ENCODE measurements at regions of chr12 and their contacts with region 1.

Region 1: GRCh38 chr12:6182116-6182898 is 17.9 kb upstream of the CD9 start:
- DNase-seq: peak; percentile 75
- ATAC-seq: peak; percentile 76
- H3K4me3 ChIP-seq: peak overlapping the region; percentile 43 to 70 (median 45); a peak in 5 of 6 replicates
- H3K27ac ChIP-seq: peak overlapping the region; percentile 79
- H3K4me1 ChIP-seq: peaks cover 73% of the 10 kb centered on the region
- H3K27me3 ChIP-seq: peaks cover 0 to 5% of the 10 kb centered on the region in 2 experiments; a peak in 1 of 5 replicates
- CTCF ChIP-seq: no peak
- EP300 ChIP-seq: no peak
- POLR2A ChIP-seq: peak; percentile 39 to 63; a peak in 3 of 4 replicates
- RAD21 ChIP-seq: no peak

Region 2: GRCh38 chr12:6062757-6063735 is 119.3 kb before region 1 on chr12:
- CTCF ChIA-PET with region 1: no interaction called
- POLR2A ChIA-PET with region 1: interaction called, 4 read pairs
- in situ Hi-C with region 1: loop called (anchors 5 kb)
- intact Hi-C with region 1: loop called (anchors 5 kb)
- DNase-seq: peak; percentile 24
- ATAC-seq: peak; percentile 73
- H3K4me3 ChIP-seq: peak overlapping the region in 1 of 3 experiments; percentile 42; a peak in 1 of 6 replicates
- H3K27ac ChIP-seq: no peak overlapping the region
- H3K4me1 ChIP-seq: peaks cover 54% of the 10 kb centered on the region
- H3K27me3 ChIP-seq: peaks cover 0 to 15% of the 10 kb centered on the region in 2 experiments; a peak in 2 of 5 replicates
- CTCF ChIP-seq: peak; percentile 95
- EP300 ChIP-seq: no peak
- POLR2A ChIP-seq: no peak
- RAD21 ChIP-seq: peak; percentile 89

Region 3: GRCh38 chr12:6069437-6070107 is 112.7 kb before region 1 on chr12:
- CTCF ChIA-PET with region 1: no interaction called
- POLR2A ChIA-PET with region 1: interaction called, 29 read pairs
- in situ Hi-C with region 1: loop called (anchors 5 kb)
- intact Hi-C with region 1: loop called (anchors 5 kb)
- DNase-seq: no peak
- ATAC-seq: no peak
- H3K4me3 ChIP-seq: no peak overlapping the region
- H3K27ac ChIP-seq: no peak overlapping the region
- H3K4me1 ChIP-seq: peaks cover 52% of the 10 kb centered on the region
- H3K27me3 ChIP-seq: peaks cover 0 to 31% of the 10 kb centered on the region in 2 experiments; a peak in 2 of 5 replicates
- CTCF ChIP-seq: no peak
- EP300 ChIP-seq: no peak
- POLR2A ChIP-seq: no peak
- RAD21 ChIP-seq: no peak

Region 4: GRCh38 chr12:6230321-6231110 is 48.2 kb after region 1 on chr12:
- CTCF ChIA-PET with region 1: no interaction called
- POLR2A ChIA-PET with region 1: interaction called, 12 read pairs
- in situ Hi-C with region 1: no loop called
- intact Hi-C with region 1: no loop called
- DNase-seq: peak; percentile 92
- ATAC-seq: peak; percentile 76
- H3K4me3 ChIP-seq: 0 out of 6 replicates have a peak overlapping the region, but pooled peaks of 1 of the 3 experiments have one; percentile 8
- H3K27ac ChIP-seq: peak overlapping the region; percentile 69
- H3K4me1 ChIP-seq: peaks cover 97% of the 10 kb centered on the region
- H3K27me3 ChIP-seq: no peaks in the 10 kb centered on the region
- CTCF ChIP-seq: 0 out of 2 replicates have a peak, but pooled peaks have one; percentile 3
- EP300 ChIP-seq: peak in 1 of 2 experiments; percentile 59; a peak in 2 of 4 replicates
- POLR2A ChIP-seq: peak in 1 of 2 experiments; percentile 39; a peak in 2 of 4 replicates
- RAD21 ChIP-seq: peak; percentile 13; the same call in 1 of the 2 replicates

Region 5: DNA sequence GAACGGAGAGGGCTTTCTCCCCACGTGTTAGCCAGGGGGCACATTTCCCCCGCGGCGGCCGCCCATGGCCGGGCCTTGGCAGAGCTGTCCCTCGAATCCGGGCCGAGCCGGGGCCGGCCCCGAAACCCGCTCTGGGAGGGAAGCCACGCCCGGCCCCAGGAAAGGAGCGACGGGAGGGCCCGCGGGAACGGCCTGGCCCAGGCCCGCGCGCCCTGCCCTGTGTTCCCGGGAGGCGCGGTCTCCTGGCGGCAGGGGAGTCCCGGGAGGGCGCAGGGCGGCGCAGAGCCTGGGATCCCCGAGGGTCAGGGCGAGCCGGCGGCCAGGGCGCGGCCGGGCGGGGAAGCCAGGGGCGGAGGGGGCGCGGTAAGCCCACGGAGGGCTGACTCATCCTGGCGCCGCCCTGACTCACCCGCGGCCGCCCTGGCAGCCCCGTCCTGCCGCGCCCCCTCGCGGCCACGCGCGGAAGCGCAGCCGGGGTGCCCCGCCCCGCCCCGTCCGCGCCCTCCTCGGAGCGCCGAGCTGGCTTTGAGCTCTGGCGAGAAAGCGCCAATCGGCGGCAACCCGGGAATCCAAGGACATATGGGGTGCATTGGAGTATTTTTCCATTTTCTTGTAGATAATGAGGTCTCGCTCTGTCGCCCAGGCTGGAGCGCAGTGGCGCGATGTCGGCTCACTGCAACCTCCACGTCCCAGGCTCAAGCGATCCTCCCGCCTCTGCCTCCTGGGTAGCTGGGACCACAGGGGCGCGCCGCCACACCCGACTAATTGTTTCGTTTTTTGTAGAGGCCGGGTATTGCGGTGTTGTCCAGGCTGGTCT is 96.3 kb after region 1 on chr12:
- CTCF ChIA-PET with region 1: no interaction called
- POLR2A ChIA-PET with region 1: interaction called, 15 read pairs
- in situ Hi-C with region 1: no loop called
- intact Hi-C with region 1: no loop called
- DNase-seq: peak; percentile 69
- ATAC-seq: peak; percentile 86
- H3K4me3 ChIP-seq: peak overlapping the region; percentile 51 to 71 (median 52); a peak in 5 of 6 replicates
- H3K27ac ChIP-seq: peak overlapping the region; percentile 75
- H3K4me1 ChIP-seq: peaks cover 85% of the 10 kb centered on the region
- H3K27me3 ChIP-seq: peaks cover 0 to 17% of the 10 kb centered on the region in 2 experiments; a peak in 4 of 5 replicates
- CTCF ChIP-seq: peak; percentile 73
- EP300 ChIP-seq: peak in 1 of 2 experiments; percentile 35; a peak in 2 of 4 replicates
- POLR2A ChIP-seq: peak in 1 of 2 experiments; percentile 51; a peak in 2 of 4 replicates
- RAD21 ChIP-seq: peak; percentile 99

Region 6: GRCh38 chr12:6376079-6376869 is 194.0 kb after region 1 on chr12:
- CTCF ChIA-PET with region 1: no interaction called
- POLR2A ChIA-PET with region 1: no interaction called
- in situ Hi-C with region 1: no loop called
- intact Hi-C with region 1: no loop called
- DNase-seq: peak; percentile 64
- ATAC-seq: peak; percentile 85
- H3K4me3 ChIP-seq: peak overlapping the region; percentile 41 to 73 (median 57)
- H3K27ac ChIP-seq: peak overlapping the region; percentile 16
- H3K4me1 ChIP-seq: peaks cover 73% of the 10 kb centered on the region
- H3K27me3 ChIP-seq: peaks cover 0 to 21% of the 10 kb centered on the region in 2 experiments; a peak in 3 of 5 replicates
- CTCF ChIP-seq: peak; percentile 66
- EP300 ChIP-seq: no peak
- POLR2A ChIP-seq: peak in 1 of 2 experiments; percentile 53; a peak in 2 of 4 replicates
- RAD21 ChIP-seq: peak; percentile 34; the same call in 1 of the 2 replicates